ENCODE measurements at regions of chr12 and their contacts with region 1.

Region 1: GRCh38 chr12:57069523-57069922 is 9.1 kb downstream of the NEMP1 start:
- DNase-seq: no peak
- ATAC-seq: peak; percentile 94

Region 2: GRCh38 chr12:56947633-56948456 is 121.7 kb before region 1 on chr12:
- intact Hi-C with region 1: no loop called
- DNase-seq: no peak
- ATAC-seq: no peak

Region 3: DNA sequence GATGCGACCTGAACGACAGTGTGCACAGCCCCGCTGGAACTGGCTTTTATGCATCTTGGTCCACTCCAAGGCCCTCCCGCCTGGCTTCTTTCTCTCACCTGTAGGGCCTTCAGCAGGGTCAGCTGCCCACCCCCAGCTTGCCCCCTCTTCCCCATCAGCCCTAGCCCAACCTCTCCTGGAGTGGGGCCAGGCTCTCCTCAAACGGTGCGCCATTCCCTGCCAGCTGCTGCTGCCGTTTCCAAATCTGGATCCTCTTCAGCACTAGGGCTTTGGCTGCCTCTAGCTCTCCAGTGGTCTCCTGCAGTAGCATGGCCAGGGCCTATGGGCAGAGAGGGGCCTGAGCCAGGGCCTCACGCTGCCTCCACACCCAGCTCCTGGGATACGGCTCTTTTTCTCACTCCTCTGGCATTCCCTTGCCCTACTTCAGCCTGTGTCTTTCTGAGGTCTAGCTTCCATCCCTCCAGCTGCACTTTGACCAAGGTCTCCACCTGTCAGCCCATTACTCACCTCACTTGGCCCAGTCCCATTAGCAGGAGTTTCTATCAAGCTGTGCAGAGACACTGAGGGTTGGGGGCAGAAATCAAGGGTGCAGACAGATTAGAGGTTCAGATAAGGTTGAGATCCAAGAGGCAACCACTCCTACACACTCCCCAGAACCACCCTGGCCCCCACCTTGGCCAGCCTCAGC is 36.6 kb after region 1 on chr12:
- intact Hi-C with region 1: loop called (anchors 5 kb)
- DNase-seq: no peak
- ATAC-seq: no peak

Region 4: GRCh38 chr12:57182921-57183790 is 113.6 kb after region 1 on chr12:
- intact Hi-C with region 1: loop called (anchors 5 kb)
- DNase-seq: peak; percentile 87
- ATAC-seq: peak; percentile 77

Measured in sciatic nerve (tissue), 2 donors.